Naive thymus-derived CD4-positive, alpha-beta T cell (primary cell): ENCODE measurements at regions of chr1 and their contacts with region 1.

Region 1: GRCh38 chr1:8409106-8409505 is 91.2 kb downstream of the SLC45A1 start:
- DNase-seq: peak in 5 of 9 donors; percentile 12 to 45 (median 38)
- ATAC-seq: peak; percentile 82
- H3K4me3 ChIP-seq: no peak overlapping the region
- H3K4me3 Mint-ChIP-seq: peak overlapping the region; percentile 38 to 74 (median 68)
- H3K27ac ChIP-seq: peak overlapping the region; percentile 49
- H3K27ac Mint-ChIP-seq: peak overlapping the region; percentile 22 to 90 (median 81)
- H3K4me1 ChIP-seq: peaks cover 25 to 44% of the 10 kb centered on the region in 2 donors
- H3K4me1 Mint-ChIP-seq: peaks cover 47 to 87% (median 72%) of the 10 kb centered on the region in 7 donors
- H3K27me3 ChIP-seq: no peaks in the 10 kb centered on the region
- H3K27me3 Mint-ChIP-seq: no peaks in the 10 kb centered on the region

Region 2: GRCh38 chr1:8396786-8397406 is 12.2 kb before region 1 on chr1:
- CTCF ChIA-PET with region 1: interaction called, 3 read pairs
- POLR2A ChIA-PET with region 1: interaction called, 4 read pairs
- intact Hi-C with region 1: loop called in 1 of 2 experiments (anchors 1 kb)
- DNase-seq: no peak
- ATAC-seq: peak; percentile 71
- H3K4me3 ChIP-seq: no peak overlapping the region
- H3K4me3 Mint-ChIP-seq: peak overlapping the region in 9 of 10 donors; percentile 6 to 94 (median 45)
- H3K27ac ChIP-seq: peak overlapping the region; percentile 10
- H3K27ac Mint-ChIP-seq: peak overlapping the region; percentile 36 to 95 (median 85)
- H3K4me1 ChIP-seq: peaks cover 38 to 42% of the 10 kb centered on the region in 2 donors
- H3K4me1 Mint-ChIP-seq: peaks cover 48 to 78% (median 73%) of the 10 kb centered on the region in 7 donors
- H3K27me3 ChIP-seq: no peaks in the 10 kb centered on the region
- H3K27me3 Mint-ChIP-seq: no peaks in the 10 kb centered on the region

Region 3: DNA sequence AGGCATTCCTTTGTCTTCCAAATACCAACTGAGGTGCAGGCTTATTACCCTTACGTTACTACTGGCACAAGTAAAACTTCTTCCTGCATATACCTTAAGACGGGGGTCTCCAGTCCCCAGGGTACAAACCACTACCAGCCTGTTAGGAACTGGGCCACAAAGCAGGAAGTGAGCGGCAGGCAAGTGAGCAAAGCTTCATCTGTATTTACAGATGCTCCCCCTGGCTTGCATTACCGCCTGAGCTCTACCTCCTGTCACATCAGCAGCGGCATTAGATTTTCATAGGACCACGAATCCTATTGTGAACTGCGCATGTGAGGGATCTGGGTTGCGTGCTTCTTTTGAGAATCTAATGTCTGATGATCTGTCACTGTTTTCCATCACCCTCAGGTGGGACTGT is 21.9 kb after region 1 on chr1:
- CTCF ChIA-PET with region 1: interaction called, 5 read pairs
- POLR2A ChIA-PET with region 1: interaction called, 8 read pairs
- intact Hi-C with region 1: loop called in 1 of 2 experiments (anchors 1 kb)
- DNase-seq: peak in 7 of 9 donors; percentile 25 to 60 (median 47)
- ATAC-seq: peak; percentile 72
- H3K4me3 ChIP-seq: no peak overlapping the region
- H3K4me3 Mint-ChIP-seq: peak overlapping the region; percentile 52 to 74 (median 62)
- H3K27ac ChIP-seq: peak overlapping the region; percentile 52
- H3K27ac Mint-ChIP-seq: peak overlapping the region; percentile 44 to 94 (median 88)
- H3K4me1 ChIP-seq: peaks cover 38 to 45% of the 10 kb centered on the region in 2 donors
- H3K4me1 Mint-ChIP-seq: peaks cover 61 to 89% (median 69%) of the 10 kb centered on the region in 7 donors
- H3K27me3 ChIP-seq: no peaks in the 10 kb centered on the region
- H3K27me3 Mint-ChIP-seq: no peaks in the 10 kb centered on the region

Region 4: GRCh38 chr1:8477166-8477982 is 68.3 kb after region 1 on chr1:
- CTCF ChIA-PET with region 1: no interaction called
- POLR2A ChIA-PET with region 1: no interaction called
- intact Hi-C with region 1: loop called in 1 of 2 experiments (anchors 1 kb)
- DNase-seq: no peak
- ATAC-seq: no peak
- H3K4me3 ChIP-seq: no peak overlapping the region
- H3K4me3 Mint-ChIP-seq: peak overlapping the region in 1 of 10 donors; percentile 23
- H3K27ac ChIP-seq: no peak overlapping the region
- H3K27ac Mint-ChIP-seq: peak overlapping the region in 7 of 9 donors; percentile 2 to 84 (median 55)
- H3K4me1 ChIP-seq: peaks cover 9 to 12% of the 10 kb centered on the region in 2 donors
- H3K4me1 Mint-ChIP-seq: peaks cover 17 to 58% (median 38%) of the 10 kb centered on the region in 7 donors
- H3K27me3 ChIP-seq: no peaks in the 10 kb centered on the region
- H3K27me3 Mint-ChIP-seq: no peaks in the 10 kb centered on the region

Region 5: GRCh38 chr1:8571200-8571984 is 162.3 kb after region 1 on chr1:
- CTCF ChIA-PET with region 1: no interaction called
- POLR2A ChIA-PET with region 1: no interaction called
- intact Hi-C with region 1: no loop called
- DNase-seq: no peak
- ATAC-seq: no peak
- H3K4me3 ChIP-seq: no peak overlapping the region
- H3K4me3 Mint-ChIP-seq: no peak overlapping the region
- H3K27ac ChIP-seq: no peak overlapping the region
- H3K27ac Mint-ChIP-seq: peak overlapping the region in 1 of 9 donors; percentile 30
- H3K4me1 ChIP-seq: no peaks in the 10 kb centered on the region
- H3K4me1 Mint-ChIP-seq: peaks cover 0 to 12% (median 9%) of the 10 kb centered on the region in 7 donors
- H3K27me3 ChIP-seq: no peaks in the 10 kb centered on the region
- H3K27me3 Mint-ChIP-seq: no peaks in the 10 kb centered on the region

Region 6: GRCh38 chr1:8671306-8671917 is 262.3 kb after region 1 on chr1:
- CTCF ChIA-PET with region 1: interaction called, 4 read pairs
- POLR2A ChIA-PET with region 1: no interaction called
- intact Hi-C with region 1: loop called in 1 of 2 experiments (anchors 5 kb)
- DNase-seq: peak in 5 of 9 donors; percentile 21 to 31 (median 26)
- ATAC-seq: peak; percentile 58
- H3K4me3 ChIP-seq: no peak overlapping the region
- H3K4me3 Mint-ChIP-seq: peak overlapping the region in 1 of 10 donors; percentile 7
- H3K27ac ChIP-seq: no peak overlapping the region
- H3K27ac Mint-ChIP-seq: no peak overlapping the region
- H3K4me1 ChIP-seq: peaks cover 0 to 9% of the 10 kb centered on the region in 2 donors
- H3K4me1 Mint-ChIP-seq: peaks cover 26 to 56% (median 35%) of the 10 kb centered on the region in 7 donors
- H3K27me3 ChIP-seq: no peaks in the 10 kb centered on the region
- H3K27me3 Mint-ChIP-seq: no peaks in the 10 kb centered on the region

Region 7: DNA sequence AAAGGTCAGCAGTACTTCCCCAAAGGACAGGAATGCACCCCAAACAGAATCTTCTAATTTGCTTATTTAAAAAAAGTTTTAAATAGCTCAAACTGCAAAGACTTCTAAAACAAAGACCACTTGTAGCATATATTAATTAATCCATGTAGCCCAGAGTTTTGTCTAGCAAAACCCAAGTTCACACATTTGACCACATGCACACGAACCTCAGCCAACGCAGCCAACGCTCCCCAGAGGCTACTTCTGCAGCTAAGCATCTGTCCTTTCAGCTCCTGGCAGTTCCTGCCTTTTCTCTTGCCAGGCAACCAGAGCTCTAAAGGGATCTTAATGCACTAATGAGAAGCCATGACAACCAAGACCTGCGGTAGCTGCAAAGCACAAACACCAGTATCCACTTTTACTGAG is 318.7 kb after region 1 on chr1:
- CTCF ChIA-PET with region 1: interaction called, 4 read pairs
- POLR2A ChIA-PET with region 1: no interaction called
- intact Hi-C with region 1: loop called in 1 of 2 experiments (anchors 1 kb)
- DNase-seq: no peak
- ATAC-seq: no peak
- H3K4me3 ChIP-seq: no peak overlapping the region
- H3K4me3 Mint-ChIP-seq: no peak overlapping the region
- H3K27ac ChIP-seq: no peak overlapping the region
- H3K27ac Mint-ChIP-seq: no peak overlapping the region
- H3K4me1 ChIP-seq: no peaks in the 10 kb centered on the region
- H3K4me1 Mint-ChIP-seq: peaks cover 5 to 24% (median 9%) of the 10 kb centered on the region in 7 donors
- H3K27me3 ChIP-seq: no peaks in the 10 kb centered on the region
- H3K27me3 Mint-ChIP-seq: no peaks in the 10 kb centered on the region

Region 8: GRCh38 chr1:8848663-8849386 is 439.7 kb after region 1 on chr1:
- CTCF ChIA-PET with region 1: interaction called, 13 read pairs
- POLR2A ChIA-PET with region 1: no interaction called
- intact Hi-C with region 1: no loop called
- DNase-seq: peak; percentile 37 to 81 (median 69)
- ATAC-seq: peak; percentile 93
- H3K4me3 ChIP-seq: no peak overlapping the region
- H3K4me3 Mint-ChIP-seq: no peak overlapping the region
- H3K27ac ChIP-seq: no peak overlapping the region
- H3K27ac Mint-ChIP-seq: no peak overlapping the region
- H3K4me1 ChIP-seq: peaks cover 0 to 3% of the 10 kb centered on the region in 2 donors
- H3K4me1 Mint-ChIP-seq: peaks cover 0 to 14% (median 5%) of the 10 kb centered on the region in 7 donors
- H3K27me3 ChIP-seq: no peaks in the 10 kb centered on the region
- H3K27me3 Mint-ChIP-seq: peaks cover 0 to 2% (median 0%) of the 10 kb centered on the region in 5 donors

Region 9: GRCh38 chr1:8871539-8871935 is 462.4 kb after region 1 on chr1:
- CTCF ChIA-PET with region 1: no interaction called
- POLR2A ChIA-PET with region 1: no interaction called
- intact Hi-C with region 1: no loop called
- DNase-seq: no peak
- ATAC-seq: peak; percentile 18
- H3K4me3 ChIP-seq: no peak overlapping the region
- H3K4me3 Mint-ChIP-seq: peak overlapping the region in 1 of 10 donors; percentile 99
- H3K27ac ChIP-seq: no peak overlapping the region
- H3K27ac Mint-ChIP-seq: peak overlapping the region in 5 of 9 donors; percentile 25 to 73 (median 69)
- H3K4me1 ChIP-seq: peaks cover 38% of the 10 kb centered on the region in 2 donors
- H3K4me1 Mint-ChIP-seq: peaks cover 30 to 87% (median 56%) of the 10 kb centered on the region in 7 donors
- H3K27me3 ChIP-seq: no peaks in the 10 kb centered on the region
- H3K27me3 Mint-ChIP-seq: no peaks in the 10 kb centered on the region